Mammary epithelial cell (primary cell): ENCODE measurements at regions of chr1 and their contacts with region 1.

Region 1: GRCh38 chr1:239792157-239792556 is 299.5 kb upstream of the FMN2 start:
- DNase-seq: no peak
- H3K4me3 ChIP-seq: no peak overlapping the region
- H3K27ac ChIP-seq: no peak overlapping the region
- H3K4me1 ChIP-seq: no peaks in the 10 kb centered on the region
- H3K27me3 ChIP-seq: no peaks in the 10 kb centered on the region
- CTCF ChIP-seq: no peak

Region 2: GRCh38 chr1:239898062-239898730 is 106.0 kb after region 1 on chr1:
- CTCF ChIA-PET with region 1: no interaction called
- dilution Hi-C with region 1: no loop called
- in situ Hi-C with region 1: no loop called
- intact Hi-C with region 1: loop called (anchors 1 kb)
- DNase-seq: peak; percentile 40
- H3K4me3 ChIP-seq: no peak overlapping the region
- H3K27ac ChIP-seq: no peak overlapping the region
- H3K4me1 ChIP-seq: no peaks in the 10 kb centered on the region
- H3K27me3 ChIP-seq: no peaks in the 10 kb centered on the region
- CTCF ChIP-seq: peak; percentile 90 to 95

Region 3: GRCh38 chr1:239976130-239976968 is 184.2 kb after region 1 on chr1:
- CTCF ChIA-PET with region 1: no interaction called
- dilution Hi-C with region 1: no loop called
- in situ Hi-C with region 1: no loop called
- intact Hi-C with region 1: loop called (anchors 1 kb)
- DNase-seq: peak; percentile 21
- H3K4me3 ChIP-seq: no peak overlapping the region
- H3K27ac ChIP-seq: no peak overlapping the region
- H3K4me1 ChIP-seq: no peaks in the 10 kb centered on the region
- H3K27me3 ChIP-seq: no peaks in the 10 kb centered on the region
- CTCF ChIP-seq: peak; percentile 91 to 99